ENCODE measurements at regions of chr9 and their contacts with region 1.

Region 1: GRCh38 chr9:69809304-69809863 is 11.2 kb upstream of the CFAP95 start:
- DNase-seq: peak; percentile 82
- H3K4me3 Mint-ChIP-seq: no peak overlapping the region
- H3K27ac Mint-ChIP-seq: no peak overlapping the region
- H3K4me1 Mint-ChIP-seq: peaks cover 7% of the 10 kb centered on the region
- H3K27me3 Mint-ChIP-seq: no peaks in the 10 kb centered on the region

Region 2: DNA sequence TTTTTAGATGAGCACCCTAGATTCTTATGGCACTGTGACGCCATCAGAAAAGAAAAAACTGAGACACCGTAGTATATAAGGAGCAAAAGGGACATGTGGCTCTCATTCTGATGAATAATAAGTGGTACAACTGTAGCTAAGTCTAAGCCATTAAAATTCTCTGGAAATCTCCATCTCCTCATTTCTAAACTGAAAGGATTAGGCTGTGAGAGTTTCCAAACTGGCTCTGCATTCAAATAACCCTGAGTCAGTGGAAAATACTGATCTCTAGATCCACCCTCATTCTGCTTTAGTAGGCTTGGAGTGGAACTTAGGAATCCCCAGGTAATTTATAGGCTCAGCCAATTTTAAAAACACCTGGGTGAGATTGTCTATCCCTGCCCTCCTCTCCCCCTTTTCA is 78.0 kb before region 1 on chr9:
- intact Hi-C with region 1: no loop called
- DNase-seq: no peak
- H3K4me3 Mint-ChIP-seq: no peak overlapping the region
- H3K27ac Mint-ChIP-seq: peak overlapping the region; percentile 69
- H3K4me1 Mint-ChIP-seq: peaks cover 15% of the 10 kb centered on the region
- H3K27me3 Mint-ChIP-seq: no peaks in the 10 kb centered on the region

Region 3: DNA sequence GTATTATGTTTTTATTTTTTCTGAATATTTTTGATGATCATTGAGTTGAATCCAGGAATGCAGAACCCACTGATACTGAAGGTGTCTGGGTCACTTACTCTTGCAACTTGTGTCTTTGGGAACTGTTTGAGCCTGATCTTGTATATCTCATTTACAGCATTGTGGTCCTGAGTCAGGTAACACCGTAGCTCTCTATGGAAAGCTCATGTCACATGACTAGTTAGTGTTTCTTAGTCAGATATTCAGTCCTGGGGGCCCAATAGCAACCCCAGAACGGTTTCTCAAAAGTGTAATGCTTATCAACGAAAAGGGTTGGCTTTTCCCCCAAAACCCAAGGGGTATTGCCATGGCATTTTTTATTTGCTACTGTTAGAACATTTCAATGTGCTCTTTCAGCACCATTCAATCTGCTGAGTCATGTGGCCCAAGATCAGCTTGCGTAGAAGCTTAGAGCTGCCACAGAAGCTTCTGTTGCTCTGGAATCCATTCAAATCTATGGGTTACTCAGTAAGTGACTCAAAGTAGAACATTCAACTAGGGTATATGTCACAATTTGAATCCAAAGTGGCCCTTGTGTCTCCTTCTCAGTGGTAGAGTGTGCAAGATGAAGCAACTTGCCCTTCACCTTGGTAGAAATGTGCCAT is 37.5 kb before region 1 on chr9:
- intact Hi-C with region 1: loop called (anchors 5 kb)
- DNase-seq: no peak
- H3K4me3 Mint-ChIP-seq: no peak overlapping the region
- H3K27ac Mint-ChIP-seq: no peak overlapping the region
- H3K4me1 Mint-ChIP-seq: no peaks in the 10 kb centered on the region
- H3K27me3 Mint-ChIP-seq: peaks cover 2% of the 10 kb centered on the region

Region 4: GRCh38 chr9:69877854-69878514 is 68.6 kb after region 1 on chr9:
- intact Hi-C with region 1: loop called (anchors 1 kb)
- DNase-seq: no peak
- H3K4me3 Mint-ChIP-seq: no peak overlapping the region
- H3K27ac Mint-ChIP-seq: no peak overlapping the region
- H3K4me1 Mint-ChIP-seq: no peaks in the 10 kb centered on the region
- H3K27me3 Mint-ChIP-seq: peaks cover 18% of the 10 kb centered on the region

Region 5: DNA sequence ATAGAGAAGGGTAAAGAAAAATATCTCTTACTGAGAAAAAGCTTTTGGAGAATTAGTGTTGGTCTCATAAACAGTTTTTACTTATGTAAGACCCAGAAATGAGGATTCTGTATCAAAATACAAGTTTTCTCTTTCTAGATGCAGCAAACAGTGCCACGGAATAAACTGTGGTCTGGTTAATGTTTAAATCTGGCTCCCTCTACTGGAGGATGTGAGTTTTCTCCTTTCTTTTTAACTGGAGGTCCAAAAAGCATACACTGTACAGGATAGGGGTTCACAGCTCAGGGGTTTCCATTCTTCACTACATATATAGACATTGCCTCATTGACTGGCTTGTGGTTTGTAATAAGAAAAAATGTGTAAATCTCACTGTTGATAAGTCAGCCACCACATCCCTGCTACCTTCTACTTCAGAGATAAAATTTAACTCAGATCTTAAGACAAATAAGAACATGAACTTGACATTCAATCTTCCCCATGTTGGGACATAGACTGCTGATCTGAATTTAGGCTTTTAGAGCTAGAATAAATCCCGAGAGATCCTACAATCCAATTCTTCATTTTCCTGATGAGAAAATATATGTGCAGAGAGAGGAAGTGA is 110.2 kb after region 1 on chr9:
- intact Hi-C with region 1: loop called (anchors 2 kb)
- DNase-seq: peak; percentile 68
- H3K4me3 Mint-ChIP-seq: no peak overlapping the region
- H3K27ac Mint-ChIP-seq: no peak overlapping the region
- H3K4me1 Mint-ChIP-seq: no peaks in the 10 kb centered on the region
- H3K27me3 Mint-ChIP-seq: peaks cover 18% of the 10 kb centered on the region

Region 6: DNA sequence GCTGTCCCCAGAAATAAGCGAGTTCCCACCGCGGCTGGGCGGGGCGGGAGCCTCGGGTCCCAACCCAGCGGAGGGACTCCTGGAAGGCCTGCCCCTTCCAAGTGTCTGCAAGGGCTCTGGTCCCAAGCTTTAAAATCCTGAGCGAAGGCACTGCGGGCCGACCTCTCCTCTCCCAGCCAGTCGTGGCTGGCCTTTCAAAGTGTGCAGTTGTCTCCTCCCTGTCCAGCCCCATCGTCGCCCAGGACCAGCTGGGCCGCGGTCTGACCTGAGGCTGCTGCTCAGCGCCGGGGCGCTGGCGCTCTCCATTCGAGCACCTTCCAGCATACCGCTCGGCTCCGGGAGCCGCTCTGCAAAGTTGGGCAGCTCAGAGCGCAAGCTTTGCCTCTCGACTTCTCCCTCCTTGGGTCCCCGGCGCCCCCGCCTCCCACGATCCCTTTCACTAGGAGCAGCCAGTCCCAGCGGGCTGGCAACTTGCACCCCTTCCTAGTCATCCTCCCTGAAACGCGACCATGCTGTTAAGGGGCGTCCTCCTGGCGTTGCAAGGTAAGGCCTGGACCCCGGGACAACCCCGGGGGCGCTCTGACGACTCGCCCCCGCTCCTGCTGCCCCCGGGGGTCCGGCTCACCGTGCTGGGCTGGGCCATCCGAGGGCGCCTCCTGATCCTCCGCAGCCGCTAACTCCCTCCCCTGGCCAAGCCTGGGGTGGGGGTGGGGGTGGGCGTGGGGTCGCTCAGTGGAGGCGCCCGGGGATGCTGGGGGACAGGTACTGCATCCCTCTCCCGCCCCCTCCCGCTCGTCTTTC is 234.5 kb after region 1 on chr9 and contains the start of gene MAMDC2:
- intact Hi-C with region 1: no loop called
- DNase-seq: no peak
- H3K4me3 Mint-ChIP-seq: peak within 1 kb of the TSS; percentile 54
- H3K27ac Mint-ChIP-seq: no peak within 1 kb of the TSS
- H3K4me1 Mint-ChIP-seq: peaks cover 4% of the 10 kb centered on the region
- H3K27me3 Mint-ChIP-seq: peaks cover 41% of the 10 kb centered on the region
- total RNA-seq, gene MAMDC2: not detected in 2 replicates